WTC11 (cell line): ENCODE measurements at regions of chr19 and their contacts with region 1.

Region 1: GRCh38 chr19:14347999-14348889 is 33.0 kb upstream of the ADGRE5 start:
- DNase-seq: peak; percentile 80
- ATAC-seq: peak; percentile 82
- H3K4me3 Mint-ChIP-seq: peak overlapping the region; percentile 45
- H3K27ac Mint-ChIP-seq: no peak overlapping the region
- H3K4me1 Mint-ChIP-seq: peaks cover under 1% of the 10 kb centered on the region
- H3K27me3 Mint-ChIP-seq: peaks cover 9% of the 10 kb centered on the region; the same call in 1 of the 2 replicates
- CTCF ChIP-seq: peak; percentile 93

Region 2: GRCh38 chr19:14183741-14184350 is 164.4 kb before region 1 on chr19:
- CTCF ChIA-PET with region 1: interaction called, 15 read pairs
- POLR2A ChIA-PET with region 1: no interaction called
- DNase-seq: no peak
- ATAC-seq: peak; percentile 36; the same call in 1 of the 2 replicates
- H3K4me3 Mint-ChIP-seq: no peak overlapping the region
- H3K27ac Mint-ChIP-seq: no peak overlapping the region; the same call in 1 of the 2 replicates
- H3K4me1 Mint-ChIP-seq: peaks cover 5% of the 10 kb centered on the region
- H3K27me3 Mint-ChIP-seq: no peaks in the 10 kb centered on the region
- CTCF ChIP-seq: no peak

Region 3: DNA sequence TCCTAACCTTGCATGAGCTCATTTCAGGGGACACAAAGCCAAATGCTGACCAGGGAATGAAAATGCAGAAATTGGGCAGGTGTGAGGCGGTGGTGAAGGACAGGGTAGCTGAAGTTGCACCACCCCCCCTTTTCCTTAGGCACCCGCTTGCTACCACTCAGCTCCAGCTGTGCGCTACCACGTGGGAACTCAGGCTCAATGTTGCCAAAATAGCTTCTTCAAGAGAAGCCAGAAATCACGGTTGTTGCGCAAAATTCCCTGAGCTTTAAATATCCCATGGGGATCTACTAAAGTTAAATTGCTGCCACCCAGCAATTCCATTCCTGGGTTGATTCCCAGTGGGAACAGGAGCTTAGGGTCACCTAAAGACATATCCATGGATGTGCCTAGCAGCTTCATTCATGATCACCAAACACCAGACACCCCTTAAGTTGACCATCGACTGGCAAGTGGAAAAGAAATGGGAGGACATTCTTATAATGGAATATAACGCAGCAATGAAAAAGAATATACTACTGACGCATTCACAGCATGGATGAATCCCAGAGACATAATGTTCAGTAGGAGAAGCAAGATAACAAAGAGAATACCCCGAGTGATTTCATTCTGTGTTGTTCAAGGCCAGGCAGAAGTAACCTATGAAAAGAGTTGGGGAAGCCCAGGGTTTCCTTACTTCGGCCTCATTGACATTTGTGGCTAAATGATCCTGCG is 129.5 kb before region 1 on chr19:
- CTCF ChIA-PET with region 1: interaction called, 10 read pairs
- POLR2A ChIA-PET with region 1: interaction called, 4 read pairs
- DNase-seq: no peak
- ATAC-seq: no peak
- H3K4me3 Mint-ChIP-seq: no peak overlapping the region
- H3K27ac Mint-ChIP-seq: no peak overlapping the region
- H3K4me1 Mint-ChIP-seq: peaks cover 15% of the 10 kb centered on the region
- H3K27me3 Mint-ChIP-seq: peaks cover 5% of the 10 kb centered on the region
- CTCF ChIP-seq: no peak

Region 4: DNA sequence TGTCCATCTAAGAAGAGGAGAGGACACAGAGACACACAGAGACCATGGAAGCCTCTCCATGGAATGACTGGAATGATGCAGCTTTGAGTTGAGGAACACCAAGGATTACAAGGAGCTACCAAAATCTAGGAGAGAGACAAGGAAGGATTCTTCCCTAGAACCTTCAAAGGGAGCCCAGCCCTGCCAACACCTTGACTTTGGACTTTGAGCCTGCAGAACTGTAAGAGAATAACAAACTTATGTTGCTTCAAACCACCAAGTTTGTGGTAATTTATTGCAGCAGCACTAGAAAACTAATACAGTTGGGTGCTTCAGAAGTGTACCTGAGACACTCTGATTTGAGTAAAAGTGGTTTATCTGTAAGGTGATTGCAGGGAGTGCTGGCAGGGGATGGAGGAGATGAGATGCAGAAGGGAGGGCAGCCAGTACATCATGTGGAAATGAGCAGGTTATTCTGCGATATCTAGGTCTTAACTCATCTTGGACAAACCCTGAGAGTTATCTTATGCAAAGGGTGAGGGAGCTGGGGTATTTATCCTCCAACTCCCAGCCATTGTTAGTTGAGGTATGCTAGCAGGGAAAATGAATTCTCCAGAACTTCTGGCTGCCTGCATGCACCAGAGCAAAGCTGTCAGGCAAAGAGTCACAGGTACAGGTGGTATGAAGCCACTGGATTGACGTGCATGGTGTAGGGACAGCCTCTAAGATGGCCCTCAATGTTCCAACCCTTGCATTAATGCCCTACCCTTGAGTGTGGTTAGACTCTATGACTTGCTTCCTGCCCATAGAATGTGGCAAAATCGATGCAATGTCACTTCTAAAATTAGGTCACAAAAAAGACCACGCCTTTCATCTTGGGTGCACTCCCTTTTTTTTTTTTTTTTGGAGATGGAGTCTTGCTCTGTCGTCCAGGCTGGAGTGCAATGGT is 111.0 kb before region 1 on chr19:
- CTCF ChIA-PET with region 1: no interaction called
- POLR2A ChIA-PET with region 1: no interaction called
- DNase-seq: no peak
- ATAC-seq: no peak
- H3K4me3 Mint-ChIP-seq: no peak overlapping the region
- H3K27ac Mint-ChIP-seq: no peak overlapping the region
- H3K4me1 Mint-ChIP-seq: peaks cover 3% of the 10 kb centered on the region; the same call in 1 of the 2 replicates
- H3K27me3 Mint-ChIP-seq: no peaks in the 10 kb centered on the region
- CTCF ChIP-seq: no peak

Region 5: GRCh38 chr19:14337510-14337909 is 10.7 kb before region 1 on chr19:
- CTCF ChIA-PET with region 1: interaction called, 17 read pairs
- POLR2A ChIA-PET with region 1: no interaction called
- DNase-seq: peak; percentile 82
- ATAC-seq: peak; percentile 89
- H3K4me3 Mint-ChIP-seq: no peak overlapping the region
- H3K27ac Mint-ChIP-seq: no peak overlapping the region
- H3K4me1 Mint-ChIP-seq: peaks cover 9% of the 10 kb centered on the region; the same call in 1 of the 2 replicates
- H3K27me3 Mint-ChIP-seq: peaks cover 8% of the 10 kb centered on the region
- CTCF ChIP-seq: no peak

Region 6: GRCh38 chr19:14472202-14472938 is 124.1 kb after region 1 on chr19:
- CTCF ChIA-PET with region 1: interaction called, 12 read pairs
- POLR2A ChIA-PET with region 1: no interaction called
- DNase-seq: peak; percentile 91
- ATAC-seq: peak; percentile 56
- H3K4me3 Mint-ChIP-seq: peak overlapping the region; percentile 56
- H3K27ac Mint-ChIP-seq: no peak overlapping the region
- H3K4me1 Mint-ChIP-seq: peaks cover 24% of the 10 kb centered on the region
- H3K27me3 Mint-ChIP-seq: peaks cover 12% of the 10 kb centered on the region
- CTCF ChIP-seq: peak; percentile 100